Transverse colon (tissue), 4 donors: ENCODE measurements at regions of chr3 and their contacts with region 1.

Region 1: GRCh38 chr3:162647321-162647720 is 1150.7 kb downstream of the OTOL1 start:
- DNase-seq: no peak
- H3K4me3 ChIP-seq: no peak overlapping the region
- H3K27ac ChIP-seq: no peak overlapping the region
- H3K4me1 ChIP-seq: no peaks in the 10 kb centered on the region
- H3K27me3 ChIP-seq: no peaks in the 10 kb centered on the region
- CTCF ChIP-seq: no peak
- EP300 ChIP-seq: no peak
- POLR2A ChIP-seq: no peak

Region 2: DNA sequence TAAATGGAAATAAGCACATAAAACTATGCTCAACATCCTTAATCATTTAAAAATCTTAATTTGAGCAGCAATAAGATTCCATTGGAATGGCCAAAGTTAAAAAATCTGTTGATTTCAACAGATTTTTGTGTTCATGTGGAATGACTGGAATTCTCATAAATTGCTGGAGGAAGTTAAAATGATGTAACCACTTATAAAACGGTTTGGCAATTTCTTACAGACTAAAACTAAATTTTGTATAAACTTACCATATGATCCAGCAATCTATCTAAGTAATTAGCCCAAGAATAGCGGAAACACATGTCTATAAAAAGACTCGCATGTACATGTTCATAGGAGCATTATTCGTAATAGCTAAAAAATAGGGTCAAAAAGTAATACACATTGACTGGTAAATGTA is 717.4 kb after region 1 on chr3:
- in situ Hi-C with region 1: no loop called
- intact Hi-C with region 1: loop called (anchors 5 kb)
- DNase-seq: no peak
- H3K4me3 ChIP-seq: no peak overlapping the region
- H3K27ac ChIP-seq: no peak overlapping the region
- H3K4me1 ChIP-seq: no peaks in the 10 kb centered on the region
- H3K27me3 ChIP-seq: no peaks in the 10 kb centered on the region
- CTCF ChIP-seq: no peak
- EP300 ChIP-seq: no peak
- POLR2A ChIP-seq: no peak